HCT116 (cell line): ENCODE measurements at regions of chr7 and their contacts with region 1.

Region 1: DNA sequence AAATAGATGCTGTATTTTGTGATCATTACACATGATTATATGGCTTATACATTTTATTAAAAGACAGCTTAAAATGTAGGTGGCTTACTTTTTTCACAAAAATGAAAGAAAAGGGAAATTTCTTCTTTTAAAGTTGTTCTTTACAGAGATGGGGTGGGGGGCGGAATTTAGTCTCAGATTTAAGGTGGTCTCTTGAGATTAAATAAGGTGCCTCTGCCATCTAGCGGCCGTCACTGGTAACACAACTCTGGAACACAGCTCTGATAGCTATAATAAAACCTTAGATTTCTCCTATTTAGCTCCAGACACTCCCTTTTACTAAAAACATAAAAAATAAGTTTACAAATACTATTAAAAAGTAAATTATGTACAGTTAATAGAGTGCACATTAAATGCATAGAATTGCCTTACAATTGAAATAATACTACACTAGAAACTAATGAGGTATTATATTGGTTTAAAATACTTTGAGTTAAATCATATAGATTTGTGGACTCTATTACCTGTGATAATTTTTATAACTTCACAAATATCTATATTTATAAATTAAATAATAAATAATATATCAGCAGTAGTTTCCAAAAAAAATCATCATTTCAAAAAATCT is 210.9 kb downstream of the DGKB start:
- DNase-seq: peak; percentile 32
- ATAC-seq: peak; percentile 53; the same call in 1 of the 2 replicates
- H3K4me3 ChIP-seq: no peak overlapping the region
- H3K27ac ChIP-seq: no peak overlapping the region
- H3K4me1 ChIP-seq: no peaks in the 10 kb centered on the region
- H3K27me3 ChIP-seq: no peaks in the 10 kb centered on the region
- CTCF ChIP-seq: peak; percentile 52 to 88 (median 65); a peak in 5 of 6 replicates
- POLR2A ChIP-seq: no peak
- RAD21 ChIP-seq: peak; percentile 73

Region 2: GRCh38 chr7:13742811-13743210 is 948.9 kb before region 1 on chr7:
- CTCF ChIA-PET with region 1: interaction called, 3 read pairs
- POLR2A ChIA-PET with region 1: no interaction called
- RAD21 ChIA-PET with region 1: no interaction called
- intact Hi-C with region 1: loop called (anchors 5 kb)
- DNase-seq: peak; percentile 39
- ATAC-seq: peak; percentile 77
- H3K4me3 ChIP-seq: no peak overlapping the region
- H3K27ac ChIP-seq: no peak overlapping the region
- H3K4me1 ChIP-seq: peaks cover 0 to 17% of the 10 kb centered on the region in 2 experiments; a peak in 3 of 4 replicates
- H3K27me3 ChIP-seq: no peaks in the 10 kb centered on the region
- CTCF ChIP-seq: peak; percentile 31 to 67 (median 48); a peak in 5 of 6 replicates
- POLR2A ChIP-seq: no peak
- RAD21 ChIP-seq: peak; percentile 59; the same call in 1 of the 2 replicates

Region 3: GRCh38 chr7:15998617-15999016 is 1306.9 kb after region 1 on chr7:
- CTCF ChIA-PET with region 1: no interaction called
- POLR2A ChIA-PET with region 1: no interaction called
- RAD21 ChIA-PET with region 1: no interaction called
- intact Hi-C with region 1: no loop called
- DNase-seq: no peak
- ATAC-seq: no peak
- H3K4me3 ChIP-seq: no peak overlapping the region
- H3K27ac ChIP-seq: no peak overlapping the region
- H3K4me1 ChIP-seq: no peaks in the 10 kb centered on the region
- H3K27me3 ChIP-seq: no peaks in the 10 kb centered on the region
- CTCF ChIP-seq: no peak
- POLR2A ChIP-seq: no peak
- RAD21 ChIP-seq: no peak